Activated CD8-positive, alpha-beta T cell treated with anti-CD3 and anti-CD28 coated beads, Interleukin-2, amount 10 ng/mL, durations not matched to agents 7 days and 5 days (primary cell): ENCODE measurements at regions of chr6 and their contacts with region 1.

Region 1: DNA sequence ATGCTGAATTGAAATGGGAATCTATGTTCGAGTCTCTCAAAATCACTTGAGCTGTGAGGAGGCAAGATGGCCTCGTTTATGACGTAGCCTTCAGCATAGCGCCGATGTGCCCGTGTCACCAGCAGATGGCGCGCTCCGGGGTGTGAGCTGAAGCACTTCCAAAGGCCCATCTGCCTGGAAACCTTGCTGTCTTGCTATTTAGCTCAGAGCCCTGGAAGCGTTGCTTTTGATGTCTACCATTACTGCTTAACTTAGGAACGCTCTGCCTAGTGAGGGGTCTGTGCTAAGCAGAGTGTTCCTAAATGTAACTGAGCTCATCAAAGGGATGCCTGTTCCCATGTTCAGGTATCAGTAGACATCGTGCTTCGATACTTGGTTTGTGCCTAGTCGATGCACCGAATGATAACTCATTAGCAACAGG is 67.7 kb downstream of the SYCP2L start:
- DNase-seq: peak; percentile 80
- ATAC-seq: peak; percentile 86
- H3K4me3 Mint-ChIP-seq: no peak overlapping the region
- H3K27ac Mint-ChIP-seq: no peak overlapping the region
- H3K4me1 Mint-ChIP-seq: no peaks in the 10 kb centered on the region
- H3K27me3 Mint-ChIP-seq: peaks cover 7% of the 10 kb centered on the region

Region 2: DNA sequence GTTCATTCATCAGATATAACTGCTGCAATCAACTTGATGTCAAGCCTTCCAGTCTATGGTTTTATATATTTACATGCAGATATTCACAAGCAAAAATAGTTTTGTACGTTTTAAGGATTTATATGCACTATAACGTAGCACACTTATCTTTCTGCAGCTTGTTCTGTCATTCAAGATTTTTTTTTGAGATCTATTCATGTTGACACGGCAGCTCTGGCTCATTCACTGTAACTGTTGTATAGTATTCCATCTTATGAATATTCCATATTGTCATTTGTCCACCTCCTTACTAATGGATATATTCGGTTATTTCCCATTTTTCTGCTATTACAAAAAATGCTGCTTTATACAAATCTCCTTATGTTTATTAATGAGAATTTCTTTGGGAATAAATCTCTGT is 76.3 kb after region 1 on chr6:
- CTCF ChIA-PET with region 1: no interaction called
- POLR2A ChIA-PET with region 1: no interaction called
- DNase-seq: no peak
- ATAC-seq: no peak
- H3K4me3 Mint-ChIP-seq: no peak overlapping the region
- H3K27ac Mint-ChIP-seq: no peak overlapping the region
- H3K4me1 Mint-ChIP-seq: no peaks in the 10 kb centered on the region
- H3K27me3 Mint-ChIP-seq: peaks cover 34% of the 10 kb centered on the region

Region 3: GRCh38 chr6:11064836-11065235 is 110.2 kb after region 1 on chr6:
- CTCF ChIA-PET with region 1: interaction called, 28 read pairs
- POLR2A ChIA-PET with region 1: no interaction called
- DNase-seq: no peak
- ATAC-seq: no peak
- H3K4me3 Mint-ChIP-seq: no peak overlapping the region
- H3K27ac Mint-ChIP-seq: no peak overlapping the region
- H3K4me1 Mint-ChIP-seq: no peaks in the 10 kb centered on the region
- H3K27me3 Mint-ChIP-seq: peaks cover 11% of the 10 kb centered on the region